ENCODE measurements at regions of chr6 and their contacts with region 1.

Region 1: GRCh38 chr6:16332175-16332542 is 93.8 kb downstream of the GMPR start:
- DNase-seq: peak; percentile 91
- H3K4me3 Mint-ChIP-seq: no peak overlapping the region
- H3K27ac Mint-ChIP-seq: no peak overlapping the region
- H3K4me1 Mint-ChIP-seq: peaks cover 9% of the 10 kb centered on the region
- H3K27me3 Mint-ChIP-seq: no peaks in the 10 kb centered on the region

Region 2: DNA sequence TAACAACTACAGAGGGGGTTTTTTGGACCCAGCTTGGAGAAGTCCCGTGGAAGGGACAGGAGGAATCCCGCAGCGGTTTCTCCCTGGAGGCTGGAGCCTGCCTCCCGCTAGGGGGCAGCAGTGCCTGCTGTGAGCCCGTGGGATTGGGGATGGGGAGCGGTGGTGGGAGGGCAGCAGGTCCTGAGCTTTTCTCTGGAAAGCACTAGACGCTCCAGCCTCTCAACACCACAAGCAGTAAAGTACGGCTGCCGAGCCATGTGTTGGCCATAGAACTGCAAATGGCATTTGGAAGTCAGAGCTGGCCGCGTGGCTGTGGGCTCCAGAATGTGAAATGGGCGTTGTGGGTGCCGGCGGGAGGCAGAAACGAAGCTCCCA is 46.0 kb before region 1 on chr6:
- CTCF ChIA-PET with region 1: interaction called, 10 read pairs
- POLR2A ChIA-PET with region 1: no interaction called
- intact Hi-C with region 1: loop called (anchors 5 kb)
- DNase-seq: peak; percentile 49
- H3K4me3 Mint-ChIP-seq: no peak overlapping the region
- H3K27ac Mint-ChIP-seq: no peak overlapping the region
- H3K4me1 Mint-ChIP-seq: no peaks in the 10 kb centered on the region
- H3K27me3 Mint-ChIP-seq: no peaks in the 10 kb centered on the region

Region 3: GRCh38 chr6:16319813-16320532 is 12.2 kb before region 1 on chr6:
- CTCF ChIA-PET with region 1: interaction called, 55 read pairs
- POLR2A ChIA-PET with region 1: no interaction called
- intact Hi-C with region 1: loop called (anchors 1 kb)
- DNase-seq: peak; percentile 81
- H3K4me3 Mint-ChIP-seq: peak overlapping the region; percentile 50
- H3K27ac Mint-ChIP-seq: peak overlapping the region; percentile 84
- H3K4me1 Mint-ChIP-seq: peaks cover 82% of the 10 kb centered on the region
- H3K27me3 Mint-ChIP-seq: no peaks in the 10 kb centered on the region

Region 4: DNA sequence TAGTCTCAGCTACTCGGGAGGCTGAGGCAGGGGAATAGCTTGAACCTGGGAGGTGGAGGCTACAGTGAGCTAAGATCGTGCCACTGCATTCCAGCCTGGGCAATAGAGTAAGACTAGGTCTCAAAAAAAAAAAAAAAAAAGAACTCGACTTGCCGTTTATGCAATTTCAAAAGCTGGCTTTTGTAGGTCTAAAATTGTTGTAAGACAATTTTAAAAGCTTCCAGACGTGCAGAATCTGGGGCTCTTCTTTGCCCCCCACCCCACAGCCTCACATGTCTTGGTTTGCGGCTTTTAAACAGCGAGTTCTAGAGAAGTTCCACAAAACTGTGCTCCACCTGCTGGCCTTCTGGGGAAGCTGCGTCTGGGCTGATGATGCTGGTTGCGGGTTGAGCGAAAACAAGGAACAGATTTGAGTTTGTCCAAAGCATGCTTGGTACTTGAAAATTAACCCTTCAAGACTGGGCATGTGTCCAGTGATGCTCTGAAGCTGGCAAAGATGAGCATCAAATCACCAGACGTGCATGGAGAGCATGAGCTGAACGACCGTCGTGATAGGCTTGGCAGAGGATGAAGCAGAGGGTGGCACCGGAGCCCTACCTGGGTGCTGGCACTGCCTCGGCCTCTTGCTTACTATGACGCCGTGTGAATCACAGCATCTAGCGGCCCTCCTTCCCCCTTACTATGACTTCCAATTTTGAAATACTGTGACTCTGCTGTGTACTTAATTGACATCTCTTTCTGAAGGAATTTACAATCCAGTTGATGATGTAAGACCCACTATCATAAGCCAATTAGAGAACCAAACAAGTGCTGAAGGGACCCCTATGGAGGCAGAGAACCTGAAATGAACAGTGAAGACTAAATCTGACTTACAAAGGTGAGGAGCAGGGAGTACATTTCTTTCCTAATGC is 77.6 kb after region 1 on chr6:
- CTCF ChIA-PET with region 1: interaction called, 66 read pairs
- POLR2A ChIA-PET with region 1: no interaction called
- intact Hi-C with region 1: loop called (anchors 2 kb)
- DNase-seq: peak; percentile 82
- H3K4me3 Mint-ChIP-seq: peak overlapping the region; percentile 71
- H3K27ac Mint-ChIP-seq: peak overlapping the region; percentile 81
- H3K4me1 Mint-ChIP-seq: peaks cover 66% of the 10 kb centered on the region
- H3K27me3 Mint-ChIP-seq: no peaks in the 10 kb centered on the region

Region 5: GRCh38 chr6:16712931-16713484 is 380.8 kb after region 1 on chr6:
- CTCF ChIA-PET with region 1: no interaction called
- POLR2A ChIA-PET with region 1: no interaction called
- intact Hi-C with region 1: loop called (anchors 2 kb)
- DNase-seq: peak; percentile 62
- H3K4me3 Mint-ChIP-seq: peak overlapping the region; percentile 64
- H3K27ac Mint-ChIP-seq: peak overlapping the region; percentile 92
- H3K4me1 Mint-ChIP-seq: peaks cover 70% of the 10 kb centered on the region
- H3K27me3 Mint-ChIP-seq: no peaks in the 10 kb centered on the region

Region 6: DNA sequence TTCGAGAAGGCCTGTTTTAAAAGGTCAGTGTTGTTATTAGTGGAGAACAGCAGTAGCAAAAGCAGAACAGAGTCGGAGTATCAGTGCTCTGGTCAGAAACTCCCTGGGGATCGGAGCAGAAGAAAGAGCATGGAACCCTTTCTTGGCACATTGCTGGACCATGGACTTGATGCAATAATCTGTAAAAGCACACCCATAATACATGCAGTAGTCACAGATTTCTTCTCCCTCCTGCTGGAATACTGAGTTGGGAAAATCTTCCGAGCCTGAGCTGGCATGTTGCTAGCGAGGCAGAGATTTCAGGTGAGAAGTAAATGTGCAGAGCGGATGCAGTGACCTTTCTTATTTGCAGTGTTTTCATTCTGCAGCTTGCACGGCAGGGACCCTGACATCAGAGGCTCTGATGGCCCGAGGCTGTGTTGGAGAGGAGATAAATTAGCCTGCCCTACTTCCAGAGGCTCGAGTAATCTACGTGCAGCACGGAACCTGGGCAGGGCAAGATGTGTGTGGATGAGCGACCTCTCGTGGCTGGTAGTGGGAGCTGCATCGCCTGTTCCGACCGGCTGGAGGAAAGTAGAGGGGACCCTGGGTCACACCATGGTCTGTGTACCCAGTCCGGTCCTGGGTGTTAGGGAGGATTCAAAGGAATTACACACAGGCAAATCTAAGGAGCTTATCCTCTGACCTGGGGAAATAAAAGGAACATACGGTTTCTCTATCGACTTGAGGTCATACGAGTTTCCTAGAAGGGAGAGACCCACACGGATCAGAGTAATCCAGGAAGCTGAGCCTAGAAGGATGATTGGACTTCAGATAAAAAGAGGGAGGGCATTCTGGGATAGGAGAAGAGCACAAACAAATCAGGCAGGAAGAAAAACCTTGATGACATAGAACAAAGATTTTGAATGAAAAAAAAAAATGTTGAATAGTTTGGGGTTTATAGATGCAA is 632.7 kb after region 1 on chr6:
- CTCF ChIA-PET with region 1: interaction called, 11 read pairs
- POLR2A ChIA-PET with region 1: no interaction called
- intact Hi-C with region 1: loop called (anchors 2 kb)
- DNase-seq: peak; percentile 83
- H3K4me3 Mint-ChIP-seq: no peak overlapping the region
- H3K27ac Mint-ChIP-seq: no peak overlapping the region
- H3K4me1 Mint-ChIP-seq: peaks cover 14% of the 10 kb centered on the region
- H3K27me3 Mint-ChIP-seq: peaks cover 15% of the 10 kb centered on the region